Lower leg skin (tissue), 4 donors: ENCODE measurements at regions of chr11 and their contacts with region 1.

Region 1: GRCh38 chr11:30270671-30271070 is 39.9 kb downstream of the FSHB start:
- DNase-seq: no peak
- H3K4me3 ChIP-seq: no peak overlapping the region
- CTCF ChIP-seq: no peak
- POLR2A ChIP-seq: no peak

Region 2: DNA sequence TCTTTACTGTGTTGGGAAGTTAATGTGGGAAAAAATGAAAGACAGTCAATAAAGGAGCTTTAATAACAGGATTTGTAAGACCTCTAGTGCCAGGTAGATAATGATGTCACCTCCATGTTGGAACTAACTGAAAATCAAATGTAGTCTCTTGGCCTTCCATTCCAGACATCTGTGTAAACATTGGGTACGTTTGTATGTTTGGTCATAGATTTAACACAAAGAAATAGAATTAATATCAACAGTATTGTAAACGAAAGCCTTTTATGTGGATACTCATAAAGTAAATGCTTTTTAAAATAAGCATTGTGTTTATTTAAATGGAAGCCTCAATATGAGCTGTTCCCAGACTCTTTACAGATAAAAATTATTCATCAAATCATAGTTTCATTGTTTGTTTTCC is 1556.8 kb before region 1 on chr11:
- intact Hi-C with region 1: loop called (anchors 10 kb)
- DNase-seq: no peak
- H3K4me3 ChIP-seq: no peak overlapping the region
- CTCF ChIP-seq: no peak
- POLR2A ChIP-seq: no peak